Calu3 (cell line): ENCODE measurements at regions of chr17 and their contacts with region 1.

Region 1: DNA sequence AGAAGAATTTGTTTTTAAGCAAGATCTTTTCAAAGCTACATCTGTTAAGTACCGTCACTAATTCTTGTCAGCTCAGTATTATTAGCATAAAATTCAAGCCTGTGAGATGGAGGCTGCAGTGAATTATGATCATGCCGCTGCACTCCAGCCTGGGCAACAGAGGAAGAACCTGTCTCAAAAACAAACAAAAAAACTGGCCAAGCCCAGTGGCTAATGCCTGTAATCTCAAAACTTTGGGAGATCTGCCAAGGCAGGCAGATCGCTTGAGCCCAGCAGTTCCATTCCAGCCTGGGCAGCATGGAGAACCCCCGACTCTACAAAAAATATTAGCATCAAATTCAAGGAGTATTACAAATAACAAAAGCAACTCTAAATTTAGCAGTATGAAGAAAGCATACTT is 88.0 kb downstream of the STXBP4 start:
- DNase-seq: peak; percentile 24
- H3K4me3 Mint-ChIP-seq: no peak overlapping the region
- H3K27ac Mint-ChIP-seq: no peak overlapping the region
- H3K4me1 Mint-ChIP-seq: no peaks in the 10 kb centered on the region
- H3K27me3 Mint-ChIP-seq: no peaks in the 10 kb centered on the region
- CTCF ChIP-seq: no peak

Region 2: DNA sequence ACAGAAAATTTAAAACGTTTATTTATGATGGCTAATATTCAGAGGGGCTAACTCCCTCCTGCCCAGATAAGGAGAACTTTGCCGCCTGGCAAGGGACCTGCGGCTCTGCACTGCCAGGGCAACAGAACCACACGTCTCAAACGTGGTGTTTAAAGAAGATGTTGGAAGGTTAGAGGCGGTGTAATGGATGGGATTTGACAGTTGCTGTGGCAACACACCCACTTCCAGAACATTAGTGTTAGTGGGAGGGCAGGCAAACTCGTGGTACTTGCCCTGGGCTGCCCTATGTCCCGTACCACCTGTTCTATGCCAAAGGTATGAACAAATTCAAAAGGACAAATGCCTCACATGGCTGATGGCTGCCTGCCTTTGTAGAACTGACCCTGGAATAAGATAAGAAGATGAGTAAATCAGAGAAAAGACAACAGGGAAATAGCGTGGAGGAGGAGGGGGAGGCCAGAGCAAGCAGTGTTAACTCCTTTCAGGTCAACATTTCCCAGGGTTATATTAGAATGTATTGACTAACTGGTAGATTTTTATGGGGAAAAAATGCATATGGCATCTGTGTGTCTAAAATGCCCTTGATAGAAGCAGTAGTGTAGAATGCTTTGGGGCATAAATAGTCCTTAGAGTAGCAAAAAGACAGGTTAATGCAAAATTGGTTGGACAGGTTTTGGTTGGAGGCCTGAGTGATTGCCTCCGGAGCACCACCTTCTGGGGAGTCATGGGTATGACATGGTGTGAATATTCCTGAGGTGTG is 239.1 kb after region 1 on chr17:
- CTCF ChIA-PET with region 1: no interaction called
- intact Hi-C with region 1: loop called (anchors 5 kb)
- DNase-seq: peak; percentile 66
- H3K4me3 Mint-ChIP-seq: no peak overlapping the region
- H3K27ac Mint-ChIP-seq: no peak overlapping the region
- H3K4me1 Mint-ChIP-seq: peaks cover 14% of the 10 kb centered on the region
- H3K27me3 Mint-ChIP-seq: no peaks in the 10 kb centered on the region
- CTCF ChIP-seq: peak; percentile 64

Region 3: GRCh38 chr17:55348749-55349354 is 292.3 kb after region 1 on chr17:
- CTCF ChIA-PET with region 1: no interaction called
- intact Hi-C with region 1: loop called (anchors 5 kb)
- DNase-seq: peak; percentile 31
- H3K4me3 Mint-ChIP-seq: no peak overlapping the region
- H3K27ac Mint-ChIP-seq: no peak overlapping the region
- H3K4me1 Mint-ChIP-seq: peaks cover 7% of the 10 kb centered on the region
- H3K27me3 Mint-ChIP-seq: no peaks in the 10 kb centered on the region
- CTCF ChIP-seq: peak; percentile 48